A673 (cell line): ENCODE measurements at regions of chr3 and their contacts with region 1.

Region 1: DNA sequence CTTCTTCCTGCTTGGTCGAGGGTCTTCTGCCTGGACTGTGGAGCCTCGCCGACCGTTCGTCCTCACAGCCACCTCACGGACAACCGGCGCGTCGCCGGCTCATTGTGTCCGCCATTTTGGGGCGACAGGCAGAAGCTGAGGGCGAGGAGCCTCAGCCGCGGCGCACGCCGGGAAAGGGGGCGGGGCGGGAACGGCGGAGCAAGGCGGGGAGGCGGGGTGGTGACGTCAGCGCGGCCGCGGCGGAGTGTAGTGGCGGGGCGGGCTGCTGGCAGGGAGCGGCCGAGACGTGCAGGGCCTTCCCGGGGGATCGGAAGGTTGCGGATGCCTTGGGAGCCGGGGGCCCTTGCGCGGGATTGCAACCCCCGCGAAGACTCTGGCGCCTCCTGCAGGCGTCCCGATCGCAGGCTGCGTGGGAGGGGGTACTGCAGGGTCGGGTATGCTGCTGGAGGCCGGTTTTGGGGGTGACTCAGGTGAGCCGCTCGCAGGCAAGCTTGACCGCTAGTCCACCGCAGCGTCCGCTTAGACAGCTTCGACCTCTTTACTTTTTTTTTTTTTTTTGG is at the start of gene WDR82:
- DNase-seq: peak; percentile 90
- H3K4me3 ChIP-seq: peak within 1 kb of the TSS; percentile 74
- H3K27ac ChIP-seq: peak within 1 kb of the TSS; percentile 89
- H3K4me1 ChIP-seq: peaks cover 7% of the 10 kb centered on the region
- H3K27me3 ChIP-seq: no peaks in the 10 kb centered on the region
- CTCF ChIP-seq: peak; percentile 37; the same call in 1 of the 2 replicates
- total RNA-seq, gene WDR82: 50.1 and 54.3 TPM in 2 replicates

Region 2: DNA sequence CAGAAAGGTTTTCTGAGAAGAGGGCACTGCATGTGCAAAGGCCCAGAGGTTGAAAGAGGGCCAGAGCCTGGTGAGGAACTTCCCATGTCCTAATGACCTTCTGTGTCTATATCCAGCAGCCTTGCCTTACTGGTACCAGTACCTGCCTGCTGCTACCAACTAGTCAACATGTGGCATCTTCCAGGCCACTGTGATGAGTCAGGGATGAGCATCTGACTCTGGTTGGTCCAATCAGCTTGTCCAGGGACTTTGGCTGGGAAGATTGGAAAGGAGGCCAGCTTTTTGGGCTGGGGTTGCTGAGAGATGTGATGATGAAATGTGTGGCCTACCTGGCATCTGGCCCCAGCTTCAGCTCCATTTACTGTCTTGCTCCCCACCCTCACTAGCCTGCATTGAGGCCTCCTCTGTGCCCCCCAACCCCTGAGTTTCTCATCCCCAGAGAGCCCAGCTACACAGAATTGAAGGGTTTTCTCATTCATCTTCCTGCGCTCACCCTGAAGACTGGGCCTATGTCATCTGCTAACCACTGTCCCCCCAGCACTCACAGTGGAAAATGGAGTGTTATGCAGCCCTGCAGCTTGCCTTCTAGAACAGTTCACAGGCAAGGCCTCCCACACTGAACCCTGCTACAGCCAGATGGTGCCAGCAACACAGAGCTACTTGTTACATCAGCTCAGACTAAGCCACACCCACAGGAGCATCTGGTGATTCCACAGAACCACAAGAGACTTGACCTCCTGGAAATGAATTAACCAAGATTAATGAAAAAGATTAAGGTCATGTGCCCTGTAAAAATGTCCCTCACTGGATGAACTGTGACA is 38.3 kb before region 1 on chr3:
- CTCF ChIA-PET with region 1: no interaction called
- POLR2A ChIA-PET with region 1: no interaction called
- intact Hi-C with region 1: loop called (anchors 5 kb)
- DNase-seq: peak; percentile 47
- H3K4me3 ChIP-seq: peak overlapping the region; percentile 75
- H3K27ac ChIP-seq: peak overlapping the region; percentile 75
- H3K4me1 ChIP-seq: peaks cover 12% of the 10 kb centered on the region
- H3K27me3 ChIP-seq: no peaks in the 10 kb centered on the region
- CTCF ChIP-seq: no peak